Heart left ventricle (tissue), 16 donors: ENCODE measurements at regions of chr5 and their contacts with region 1.

Region 1: DNA sequence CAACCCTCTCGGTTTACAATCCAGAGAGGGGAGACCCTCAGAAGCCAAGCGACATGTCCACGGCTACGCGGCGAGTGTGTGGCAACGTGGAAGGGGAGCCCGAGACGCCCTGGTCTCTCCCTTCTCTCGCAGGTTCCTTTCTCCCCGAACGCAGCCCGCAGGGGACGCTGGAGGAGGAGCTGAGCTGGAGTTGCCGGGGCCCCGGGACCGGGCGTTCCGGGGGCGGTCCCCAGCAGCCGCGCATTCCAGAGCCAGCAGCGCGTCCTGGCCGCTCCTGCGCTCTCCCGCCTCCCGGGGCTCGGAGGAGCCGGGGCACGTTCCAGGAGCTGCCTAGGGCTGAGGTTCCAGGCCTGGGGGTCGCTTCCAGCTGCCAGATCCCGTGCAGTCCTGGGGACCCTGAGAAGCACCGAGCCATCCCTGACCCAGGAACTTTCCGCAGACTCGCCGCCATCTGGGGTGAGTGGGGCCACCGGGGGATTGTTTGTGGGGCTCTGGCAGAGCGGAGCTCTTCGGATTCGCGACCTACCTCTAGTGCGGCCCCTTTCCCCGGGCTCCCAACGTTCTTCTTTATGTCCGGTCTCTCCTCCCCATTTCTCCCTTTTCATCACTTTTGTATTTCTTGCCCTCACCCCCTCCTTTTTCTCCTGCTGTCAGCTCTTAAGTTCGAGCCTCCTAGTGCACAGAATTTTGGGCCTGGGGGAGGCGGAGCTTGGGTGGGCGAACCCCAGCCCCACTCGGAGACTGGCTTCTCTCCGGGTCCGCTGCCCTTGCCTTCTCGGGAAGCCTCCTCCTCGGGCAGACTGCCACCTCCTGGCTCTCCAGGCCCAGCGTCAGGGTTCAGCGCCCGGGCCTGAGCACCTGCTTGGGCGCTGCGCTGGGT is at the start of gene SMIM3:
- DNase-seq: peak; percentile 87 to 93 (median 88)
- ATAC-seq: peak; percentile 77 to 88 (median 84)
- H3K4me3 ChIP-seq: peak within 1 kb of the TSS; percentile 57 to 87 (median 75)
- H3K27ac ChIP-seq: peak within 1 kb of the TSS; percentile 79 to 93 (median 90)
- H3K4me1 ChIP-seq: peaks cover 9 to 60% (median 42%) of the 10 kb centered on the region in 12 donors
- H3K27me3 ChIP-seq: no peaks in the 10 kb centered on the region
- CTCF ChIP-seq: peak in 11 of 12 donors; percentile 12 to 60 (median 38)
- POLR2A ChIP-seq: peak in 1 of 2 donors; percentile 69
- total RNA-seq, gene SMIM3: 7.1 to 27.3 (median 19.1) TPM

Region 2: GRCh38 chr5:150700594-150701293 is 78.0 kb before region 1 on chr5 and contains the start of gene RBM22:
- intact Hi-C with region 1: loop called in 2 of 10 experiments (anchors 2 to 5 kb)
- DNase-seq: peak; percentile 93 to 97 (median 95)
- ATAC-seq: peak; percentile 97 to 100 (median 99)
- H3K4me3 ChIP-seq: peak within 1 kb of the TSS; percentile 73 to 99 (median 94)
- H3K27ac ChIP-seq: peak within 1 kb of the TSS; percentile 92 to 99 (median 98)
- H3K4me1 ChIP-seq: peaks cover 0 to 24% (median 16%) of the 10 kb centered on the region in 12 donors
- H3K27me3 ChIP-seq: no peaks in the 10 kb centered on the region
- CTCF ChIP-seq: peak; percentile 43 to 81 (median 62)
- POLR2A ChIP-seq: peak in 1 of 2 donors; percentile 87
- total RNA-seq, gene RBM22: 23.5 to 42.3 (median 28.0) TPM

Region 3: GRCh38 chr5:150758531-150759333 is 20.0 kb before region 1 on chr5 and contains the start of gene DCTN4:
- intact Hi-C with region 1: loop called in 3 of 10 experiments (anchors 1 to 2 kb)
- DNase-seq: peak; percentile 97 to 98 (median 97)
- ATAC-seq: peak; percentile 93 to 99 (median 96)
- H3K4me3 ChIP-seq: peak within 1 kb of the TSS; percentile 43 to 88 (median 73)
- H3K27ac ChIP-seq: peak within 1 kb of the TSS; percentile 90 to 98 (median 96)
- H3K4me1 ChIP-seq: peaks cover 6 to 60% (median 17%) of the 10 kb centered on the region in 12 donors
- H3K27me3 ChIP-seq: no peaks in the 10 kb centered on the region
- CTCF ChIP-seq: peak in 4 of 12 donors; percentile 12 to 47 (median 20)
- POLR2A ChIP-seq: peak in 1 of 2 donors; percentile 59
- total RNA-seq, gene DCTN4: 41.6 to 70.6 (median 50.4) TPM

Region 4: DNA sequence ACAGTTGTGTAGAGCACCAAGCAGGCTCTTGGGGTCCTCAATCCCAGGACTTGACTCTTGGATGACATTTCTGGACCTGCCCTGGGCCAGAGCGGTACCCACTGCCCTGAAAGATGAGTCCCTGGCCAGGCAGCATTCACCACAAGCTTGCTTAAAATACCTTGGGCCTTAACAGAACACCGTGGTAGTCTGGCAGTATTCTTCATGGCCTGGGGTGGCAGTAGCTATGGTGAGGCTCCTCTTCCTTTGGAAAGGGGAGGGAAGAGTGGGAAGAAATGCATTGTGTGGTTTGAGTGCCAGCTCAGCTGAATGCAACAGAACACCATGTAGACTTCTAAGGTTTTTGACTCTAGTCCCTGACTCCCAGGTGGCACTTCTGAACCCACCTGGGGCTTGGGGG is 38.2 kb after region 1 on chr5:
- intact Hi-C with region 1: no loop called
- DNase-seq: no peak
- ATAC-seq: no peak
- H3K4me3 ChIP-seq: no peak overlapping the region
- H3K27ac ChIP-seq: no peak overlapping the region
- H3K4me1 ChIP-seq: no peaks in the 10 kb centered on the region
- H3K27me3 ChIP-seq: no peaks in the 10 kb centered on the region
- CTCF ChIP-seq: no peak
- POLR2A ChIP-seq: no peak

Region 5: DNA sequence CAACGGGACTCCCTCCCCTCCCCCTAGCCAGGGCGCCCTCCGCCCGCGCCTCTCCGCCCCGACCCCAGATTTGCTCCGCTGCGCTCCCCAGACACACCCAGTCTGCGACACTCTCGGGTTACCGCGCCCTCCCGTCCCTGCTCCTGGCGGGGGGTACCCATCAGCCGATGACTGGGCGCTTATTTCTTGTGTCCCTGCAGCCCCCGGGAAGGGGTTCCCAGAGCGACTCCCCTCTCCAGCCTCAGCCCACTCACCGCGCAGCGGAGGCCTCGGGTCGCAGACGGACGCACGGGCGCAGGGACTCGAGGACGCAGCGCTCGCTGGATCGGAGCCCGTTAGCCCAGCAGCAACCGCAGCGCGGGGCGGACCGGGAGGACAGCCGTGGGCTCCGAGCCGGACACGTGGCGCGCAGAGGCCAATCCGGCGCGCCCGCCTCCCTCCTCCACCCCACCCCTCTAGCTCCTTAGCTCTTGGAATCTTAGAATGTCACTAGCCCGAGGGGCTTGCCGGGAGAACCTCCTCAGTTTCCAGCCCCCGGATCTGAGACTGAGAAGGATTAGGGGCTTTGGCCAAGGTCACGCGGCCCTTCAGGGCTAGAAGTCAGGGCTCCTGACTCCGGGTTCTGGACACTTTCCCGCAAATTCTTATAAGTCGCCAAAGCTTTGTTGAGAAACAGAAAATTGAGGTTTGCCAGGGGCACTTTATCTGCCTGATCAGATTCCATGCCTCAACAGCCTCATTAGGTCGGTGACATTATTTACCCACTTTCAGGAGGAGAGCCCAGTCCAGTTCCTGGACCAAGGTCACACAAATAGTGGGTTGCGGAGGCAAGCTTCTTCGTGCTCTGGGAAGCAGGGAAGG is 378.9 kb after region 1 on chr5 and contains the start of gene ANXA6:
- intact Hi-C with region 1: loop called in 1 of 10 experiments (anchors 10 kb)
- DNase-seq: peak; percentile 91 to 95 (median 92)
- ATAC-seq: peak; percentile 97 to 99 (median 98)
- H3K4me3 ChIP-seq: peak within 1 kb of the TSS; percentile 58 to 97 (median 86)
- H3K27ac ChIP-seq: peak within 1 kb of the TSS; percentile 70 to 94 (median 90)
- H3K4me1 ChIP-seq: peaks cover 6 to 54% (median 46%) of the 10 kb centered on the region in 12 donors
- H3K27me3 ChIP-seq: no peaks in the 10 kb centered on the region
- CTCF ChIP-seq: no peak
- POLR2A ChIP-seq: peak in 1 of 2 donors; percentile 74
- total RNA-seq, gene ANXA6: 179 to 287 (median 220) TPM